ENCODE measurements at regions of chr10 and their contacts with region 1.

Region 1: DNA sequence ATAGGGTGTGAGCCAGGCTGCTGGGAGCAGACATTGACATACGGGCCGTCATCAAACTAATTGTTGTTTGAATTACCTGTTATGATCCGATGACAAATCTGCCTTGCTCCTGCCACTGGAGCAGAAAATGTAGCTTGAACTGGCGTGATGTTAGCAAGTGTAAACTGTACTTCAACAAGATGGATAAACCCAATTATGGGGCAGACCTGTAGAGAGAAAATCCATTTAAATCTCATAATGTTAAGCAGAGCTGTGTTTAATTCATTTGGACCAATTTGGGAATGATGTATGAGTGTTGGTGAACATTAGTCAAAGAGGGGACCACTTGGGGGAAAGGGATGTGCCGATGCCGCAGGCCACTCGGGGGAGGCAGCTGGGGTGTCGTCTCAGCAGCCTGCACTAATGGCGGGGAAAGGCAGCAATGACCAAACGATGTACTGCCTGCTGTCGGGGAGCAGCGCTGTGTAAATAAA is 27.4 kb downstream of the TCF7L2 start:
- DNase-seq: no peak
- H3K4me3 Mint-ChIP-seq: no peak overlapping the region
- H3K27ac Mint-ChIP-seq: no peak overlapping the region
- H3K4me1 Mint-ChIP-seq: no peaks in the 10 kb centered on the region
- H3K27me3 Mint-ChIP-seq: no peaks in the 10 kb centered on the region
- CTCF ChIP-seq: no peak

Region 2: DNA sequence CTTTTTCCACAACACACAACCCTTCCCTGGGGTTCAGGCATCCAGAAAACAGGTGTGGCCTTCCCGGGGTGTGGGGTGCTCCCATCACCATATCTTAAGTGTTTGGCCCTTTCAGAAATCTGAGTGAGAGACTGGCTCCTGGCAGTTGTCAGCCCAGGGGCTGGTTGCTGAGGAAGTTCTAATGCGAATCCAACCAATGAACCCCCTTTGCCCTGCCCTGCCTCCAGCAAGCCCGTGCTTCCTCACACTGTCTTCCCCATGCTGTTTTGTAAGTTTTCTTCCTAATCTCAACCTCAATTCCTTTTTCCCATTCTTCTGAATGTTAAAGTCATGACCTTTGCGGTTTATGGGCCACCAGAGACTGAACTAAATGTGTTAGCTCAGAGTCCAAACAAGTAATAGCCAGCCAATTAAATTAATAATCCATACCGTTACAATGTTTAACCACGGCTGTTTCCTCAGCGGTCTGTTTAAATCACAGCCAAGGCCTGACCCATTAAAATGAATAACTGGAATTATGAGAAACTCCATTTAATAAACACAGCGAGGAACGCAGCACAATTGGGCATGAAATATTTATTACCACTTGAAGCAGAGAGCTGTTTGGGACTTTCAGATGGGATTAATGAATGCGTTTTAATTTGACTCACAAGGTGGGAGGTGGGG is 118.3 kb before region 1 on chr10:
- CTCF ChIA-PET with region 1: no interaction called
- intact Hi-C with region 1: no loop called
- DNase-seq: no peak
- H3K4me3 Mint-ChIP-seq: no peak overlapping the region
- H3K27ac Mint-ChIP-seq: no peak overlapping the region
- H3K4me1 Mint-ChIP-seq: no peaks in the 10 kb centered on the region
- H3K27me3 Mint-ChIP-seq: no peaks in the 10 kb centered on the region
- CTCF ChIP-seq: no peak

Region 3: DNA sequence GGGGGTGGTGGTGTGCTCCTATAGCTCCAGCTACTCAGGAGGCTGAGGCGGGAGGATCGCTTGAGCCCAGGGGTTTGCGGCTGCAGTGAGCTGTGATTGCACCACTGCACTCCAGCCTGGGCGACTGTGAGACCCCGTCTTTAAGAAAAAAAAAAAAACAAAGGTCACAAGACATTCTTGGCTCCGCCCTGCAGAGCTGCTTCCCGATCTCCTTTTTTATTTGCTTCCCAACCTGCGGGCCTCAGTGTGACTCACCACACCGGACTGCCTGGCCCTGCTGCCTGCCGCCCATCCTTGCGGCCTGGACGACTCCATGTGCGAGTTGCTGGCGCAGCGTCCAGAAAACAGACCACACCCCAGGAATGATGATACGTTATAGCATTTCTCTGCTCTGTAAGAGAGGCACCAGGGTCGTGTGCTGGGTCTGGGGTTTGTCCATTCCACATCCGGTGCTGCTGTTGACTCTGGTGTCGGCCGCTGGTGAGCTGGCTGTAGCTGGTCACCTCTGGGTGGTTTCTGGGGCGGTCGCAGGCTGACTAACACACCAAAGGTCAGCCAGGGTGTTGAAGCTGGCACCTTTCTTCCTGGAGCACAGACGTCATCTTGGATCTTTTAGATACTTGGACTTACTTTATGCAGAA is 96.2 kb after region 1 on chr10:
- CTCF ChIA-PET with region 1: interaction called, 10 read pairs
- intact Hi-C with region 1: no loop called
- DNase-seq: peak; percentile 87
- H3K4me3 Mint-ChIP-seq: peak overlapping the region; percentile 16
- H3K27ac Mint-ChIP-seq: peak overlapping the region; percentile 67
- H3K4me1 Mint-ChIP-seq: peaks cover 40% of the 10 kb centered on the region
- H3K27me3 Mint-ChIP-seq: no peaks in the 10 kb centered on the region
- CTCF ChIP-seq: no peak

Measured in Calu3 (cell line).